ENCODE measurements at regions of chr15 and their contacts with region 1.

Region 1: DNA sequence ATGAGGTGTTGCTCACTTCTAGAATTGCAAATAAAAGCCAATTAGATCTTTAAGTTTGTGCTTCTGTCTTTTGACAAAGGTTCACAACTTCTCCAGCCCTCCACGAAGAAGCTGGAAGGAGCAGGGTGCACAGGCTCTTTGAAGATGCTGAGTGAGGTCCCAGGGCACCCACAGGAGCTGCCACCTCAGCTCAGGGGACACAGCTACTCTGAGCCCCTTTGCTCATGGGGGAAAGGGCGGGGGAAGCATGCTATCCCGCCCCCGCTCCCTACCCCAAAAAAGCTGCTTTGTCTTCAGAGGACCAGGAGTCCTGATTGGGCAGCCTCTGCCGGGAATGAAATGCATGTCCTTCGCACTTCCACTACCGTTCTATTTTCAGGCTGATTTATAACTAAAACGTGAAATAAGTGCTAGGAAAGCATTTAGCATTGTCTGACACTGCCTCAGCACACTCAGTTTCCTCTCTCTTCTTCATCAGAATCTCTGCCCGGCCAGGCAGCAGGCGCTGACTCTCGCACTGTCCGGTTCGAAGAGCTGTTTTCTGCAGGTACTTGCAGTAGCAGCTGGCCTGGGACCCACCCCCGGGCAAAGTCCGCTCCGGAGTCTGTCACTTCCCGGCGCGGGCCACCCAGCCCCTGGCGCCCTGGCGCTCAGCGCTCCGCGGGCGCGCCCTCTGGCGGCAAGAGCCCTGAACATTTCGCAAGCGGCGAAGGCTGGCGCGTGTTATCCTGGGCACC is 45.5 kb upstream of the KLHL25 start:
- DNase-seq: peak; percentile 79
- H3K4me3 Mint-ChIP-seq: peak overlapping the region; percentile 53
- H3K27ac Mint-ChIP-seq: no peak overlapping the region
- H3K4me1 Mint-ChIP-seq: no peaks in the 10 kb centered on the region
- H3K27me3 Mint-ChIP-seq: peaks cover 5% of the 10 kb centered on the region
- CTCF ChIP-seq: peak; percentile 87

Region 2: GRCh38 chr15:85296615-85297402 is 543.4 kb before region 1 on chr15:
- CTCF ChIA-PET with region 1: interaction called, 13 read pairs
- POLR2A ChIA-PET with region 1: no interaction called
- intact Hi-C with region 1: no loop called
- DNase-seq: peak; percentile 83
- H3K4me3 Mint-ChIP-seq: no peak overlapping the region
- H3K27ac Mint-ChIP-seq: no peak overlapping the region
- H3K4me1 Mint-ChIP-seq: peaks cover 11% of the 10 kb centered on the region
- H3K27me3 Mint-ChIP-seq: no peaks in the 10 kb centered on the region
- CTCF ChIP-seq: peak; percentile 65

Region 3: GRCh38 chr15:85618956-85619491 is 221.2 kb before region 1 on chr15:
- CTCF ChIA-PET with region 1: no interaction called
- POLR2A ChIA-PET with region 1: no interaction called
- intact Hi-C with region 1: no loop called
- DNase-seq: peak; percentile 91
- H3K4me3 Mint-ChIP-seq: no peak overlapping the region
- H3K27ac Mint-ChIP-seq: no peak overlapping the region
- H3K4me1 Mint-ChIP-seq: peaks cover 32% of the 10 kb centered on the region
- H3K27me3 Mint-ChIP-seq: no peaks in the 10 kb centered on the region
- CTCF ChIP-seq: no peak

Region 4: GRCh38 chr15:85741021-85741421 is 99.2 kb before region 1 on chr15:
- CTCF ChIA-PET with region 1: interaction called, 12 read pairs
- POLR2A ChIA-PET with region 1: no interaction called
- intact Hi-C with region 1: no loop called
- DNase-seq: no peak
- H3K4me3 Mint-ChIP-seq: no peak overlapping the region
- H3K27ac Mint-ChIP-seq: no peak overlapping the region
- H3K4me1 Mint-ChIP-seq: no peaks in the 10 kb centered on the region
- H3K27me3 Mint-ChIP-seq: no peaks in the 10 kb centered on the region
- CTCF ChIP-seq: no peak

Region 5: GRCh38 chr15:85764649-85765277 is 75.5 kb before region 1 on chr15:
- CTCF ChIA-PET with region 1: interaction called, 12 read pairs
- POLR2A ChIA-PET with region 1: no interaction called
- intact Hi-C with region 1: no loop called
- DNase-seq: peak; percentile 19
- H3K4me3 Mint-ChIP-seq: no peak overlapping the region
- H3K27ac Mint-ChIP-seq: no peak overlapping the region
- H3K4me1 Mint-ChIP-seq: peaks cover 17% of the 10 kb centered on the region
- H3K27me3 Mint-ChIP-seq: no peaks in the 10 kb centered on the region
- CTCF ChIP-seq: no peak

Region 6: GRCh38 chr15:85785887-85786780 is 54.1 kb before region 1 on chr15:
- CTCF ChIA-PET with region 1: interaction called, 42 read pairs
- POLR2A ChIA-PET with region 1: no interaction called
- intact Hi-C with region 1: no loop called
- DNase-seq: peak; percentile 67
- H3K4me3 Mint-ChIP-seq: peak overlapping the region; percentile 44
- H3K27ac Mint-ChIP-seq: peak overlapping the region; percentile 63
- H3K4me1 Mint-ChIP-seq: peaks cover 12% of the 10 kb centered on the region
- H3K27me3 Mint-ChIP-seq: no peaks in the 10 kb centered on the region
- CTCF ChIP-seq: no peak

Region 7: GRCh38 chr15:85800467-85801123 is 39.6 kb before region 1 on chr15:
- CTCF ChIA-PET with region 1: interaction called, 29 read pairs
- POLR2A ChIA-PET with region 1: no interaction called
- intact Hi-C with region 1: loop called (anchors 1 kb)
- DNase-seq: peak; percentile 86
- H3K4me3 Mint-ChIP-seq: no peak overlapping the region
- H3K27ac Mint-ChIP-seq: no peak overlapping the region
- H3K4me1 Mint-ChIP-seq: peaks cover 16% of the 10 kb centered on the region
- H3K27me3 Mint-ChIP-seq: no peaks in the 10 kb centered on the region
- CTCF ChIP-seq: peak; percentile 29

Region 8: GRCh38 chr15:85819938-85820337 is 20.3 kb before region 1 on chr15:
- CTCF ChIA-PET with region 1: interaction called, 13 read pairs
- POLR2A ChIA-PET with region 1: interaction called, 3 read pairs
- intact Hi-C with region 1: no loop called
- DNase-seq: no peak
- H3K4me3 Mint-ChIP-seq: no peak overlapping the region
- H3K27ac Mint-ChIP-seq: no peak overlapping the region
- H3K4me1 Mint-ChIP-seq: no peaks in the 10 kb centered on the region
- H3K27me3 Mint-ChIP-seq: peaks cover 21% of the 10 kb centered on the region
- CTCF ChIP-seq: no peak